Activated naive CD4-positive, alpha-beta T cell treated with anti-CD3 and anti-CD28 coated beads for 36 hours (primary cell): ENCODE measurements at regions of chr17 and their contacts with region 1.

Region 1: DNA sequence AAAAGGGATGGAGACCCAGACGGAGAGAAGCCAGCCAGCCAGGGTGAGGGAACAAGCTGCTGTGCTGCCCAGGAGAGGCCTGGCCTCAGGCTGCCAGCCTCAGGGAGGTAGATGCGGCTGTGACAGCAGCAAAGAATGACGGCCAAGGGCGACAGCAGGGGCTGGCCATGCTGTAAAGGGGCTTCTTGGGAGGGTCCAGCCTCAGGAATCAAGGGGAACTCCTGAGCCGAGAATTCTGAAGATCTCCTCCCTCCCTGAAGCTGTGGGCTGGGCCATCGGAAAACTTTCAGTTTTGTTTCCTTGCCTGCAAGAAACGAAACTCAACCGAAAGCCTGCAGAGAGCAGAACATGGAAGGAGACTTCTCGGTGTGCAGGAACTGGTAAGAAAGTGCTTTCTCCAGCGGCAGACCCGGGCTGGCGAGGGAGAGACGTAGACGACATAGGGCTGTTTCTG is at the start of gene XAF1:
- DNase-seq: peak; percentile 61
- H3K4me3 Mint-ChIP-seq: peak within 1 kb of the TSS; percentile 93
- H3K27ac Mint-ChIP-seq: peak within 1 kb of the TSS; percentile 84
- H3K4me1 Mint-ChIP-seq: peaks cover 53% of the 10 kb centered on the region
- H3K27me3 Mint-ChIP-seq: no peaks in the 10 kb centered on the region
- total RNA-seq, gene XAF1: 15.0 to 19.0 TPM

Region 2: DNA sequence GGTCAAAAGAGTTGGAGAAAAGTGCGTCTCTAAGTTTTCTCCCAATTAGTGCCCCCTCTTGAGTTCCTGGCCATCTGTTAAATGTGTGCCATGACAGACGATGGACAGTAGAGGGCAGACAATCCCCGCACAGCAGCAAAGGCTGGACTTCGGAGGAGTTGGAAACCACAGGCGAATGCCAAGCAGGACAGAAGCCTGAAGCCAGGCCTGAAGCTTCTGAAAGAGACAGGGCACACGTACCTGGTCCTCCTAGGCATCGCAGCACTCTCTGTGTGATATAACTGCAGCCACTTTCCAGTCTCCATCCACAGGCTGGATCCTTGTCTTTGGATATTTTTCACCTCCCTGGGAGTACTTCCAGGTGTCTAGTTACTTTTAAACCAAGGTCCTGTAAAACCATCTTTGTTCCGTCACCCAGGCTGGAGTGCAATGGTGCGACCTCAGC is 89.7 kb before region 1 on chr17:
- CTCF ChIA-PET with region 1: interaction called, 4 read pairs
- intact Hi-C with region 1: loop called (anchors 5 kb)
- DNase-seq: peak; percentile 65
- H3K4me3 Mint-ChIP-seq: no peak overlapping the region
- H3K27ac Mint-ChIP-seq: no peak overlapping the region
- H3K4me1 Mint-ChIP-seq: peaks cover 10% of the 10 kb centered on the region
- H3K27me3 Mint-ChIP-seq: no peaks in the 10 kb centered on the region

Region 3: GRCh38 chr17:7021993-7022778 is 266.4 kb after region 1 on chr17:
- CTCF ChIA-PET with region 1: no interaction called
- intact Hi-C with region 1: no loop called
- DNase-seq: peak; percentile 80
- H3K4me3 Mint-ChIP-seq: peak overlapping the region; percentile 59
- H3K27ac Mint-ChIP-seq: peak overlapping the region; percentile 26
- H3K4me1 Mint-ChIP-seq: peaks cover 29% of the 10 kb centered on the region
- H3K27me3 Mint-ChIP-seq: peaks cover 4% of the 10 kb centered on the region